Prostate gland (tissue), 2 donors: ENCODE measurements at regions of chr20 and their contacts with region 1.

Region 1: GRCh38 chr20:32789896-32790750 is 27.9 kb downstream of the DNMT3B start:
- DNase-seq: peak; percentile 63
- H3K4me3 ChIP-seq: no peak overlapping the region
- H3K27ac ChIP-seq: no peak overlapping the region
- H3K4me1 ChIP-seq: no peaks in the 10 kb centered on the region
- H3K27me3 ChIP-seq: no peaks in the 10 kb centered on the region
- CTCF ChIP-seq: peak; percentile 93 to 96 (median 94)
- POLR2A ChIP-seq: no peak

Region 2: DNA sequence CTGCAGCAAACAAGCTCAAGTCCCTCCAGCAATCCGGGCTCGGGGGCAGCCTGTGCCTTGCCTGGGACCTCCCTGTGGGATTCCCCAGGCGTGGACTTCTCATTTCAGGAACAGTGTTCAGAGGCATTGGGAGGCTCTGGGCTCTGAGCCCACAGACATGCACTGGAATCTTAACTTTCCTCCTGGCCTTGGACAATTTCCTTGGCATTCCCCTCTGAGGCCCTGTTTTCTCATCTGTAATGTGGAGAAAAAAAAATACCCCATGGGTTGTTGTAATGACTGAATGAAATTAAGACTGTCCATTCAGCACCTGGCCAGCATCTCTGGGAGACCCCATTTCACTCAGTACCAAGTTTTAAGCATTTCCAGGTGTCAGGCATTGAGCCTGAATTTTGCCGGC is 306.9 kb after region 1 on chr20:
- intact Hi-C with region 1: loop called (anchors 10 kb)
- DNase-seq: no peak
- H3K4me3 ChIP-seq: no peak overlapping the region
- H3K27ac ChIP-seq: no peak overlapping the region
- H3K4me1 ChIP-seq: no peaks in the 10 kb centered on the region
- H3K27me3 ChIP-seq: no peaks in the 10 kb centered on the region
- CTCF ChIP-seq: no peak
- POLR2A ChIP-seq: no peak